ENCODE measurements at regions of chr3 and their contacts with region 1.

Region 1: GRCh38 chr3:148943506-148944205 is 47.7 kb upstream of the GYG1 start:
- DNase-seq: no peak
- H3K4me3 ChIP-seq: no peak overlapping the region
- H3K27ac ChIP-seq: no peak overlapping the region
- H3K4me1 ChIP-seq: peaks cover 3 to 13% (median 6%) of the 10 kb centered on the region in 4 donors
- H3K27me3 ChIP-seq: no peaks in the 10 kb centered on the region
- CTCF ChIP-seq: peak; percentile 58 to 76 (median 70)
- EP300 ChIP-seq: no peak
- POLR2A ChIP-seq: no peak

Region 2: GRCh38 chr3:148379763-148380382 is 563.8 kb before region 1 on chr3:
- in situ Hi-C with region 1: loop called in 3 of 4 experiments (anchors 25 kb)
- intact Hi-C with region 1: loop called (anchors 10 kb)
- DNase-seq: no peak
- H3K4me3 ChIP-seq: no peak overlapping the region
- H3K27ac ChIP-seq: no peak overlapping the region
- H3K4me1 ChIP-seq: no peaks in the 10 kb centered on the region
- H3K27me3 ChIP-seq: no peaks in the 10 kb centered on the region
- CTCF ChIP-seq: peak; percentile 35 to 59 (median 45)
- EP300 ChIP-seq: no peak
- POLR2A ChIP-seq: no peak

Region 3: DNA sequence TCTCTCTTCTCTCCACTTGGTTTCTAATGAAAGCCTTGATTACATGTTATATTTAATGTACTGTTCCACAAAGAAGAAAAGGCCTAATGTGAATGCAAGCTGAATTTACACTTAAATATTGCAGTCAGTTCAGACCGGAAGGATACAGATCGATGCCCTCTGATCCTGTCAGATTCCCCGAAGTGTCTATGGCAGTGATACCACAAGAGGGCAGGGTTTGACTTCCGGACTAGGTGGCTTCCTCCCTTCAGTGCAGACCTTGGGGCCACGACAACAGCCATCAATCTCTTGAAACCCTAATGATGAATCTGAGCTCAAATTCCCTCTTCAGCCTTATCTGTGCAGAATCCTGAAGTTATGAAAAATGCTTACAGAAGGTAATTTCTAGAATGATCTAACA is 216.4 kb before region 1 on chr3:
- in situ Hi-C with region 1: loop called in 1 of 4 experiments (anchors 10 kb)
- intact Hi-C with region 1: loop called (anchors 10 kb)
- DNase-seq: peak; percentile 18
- H3K4me3 ChIP-seq: no peak overlapping the region
- H3K27ac ChIP-seq: no peak overlapping the region
- H3K4me1 ChIP-seq: peaks cover 0 to 2% (median 0%) of the 10 kb centered on the region in 4 donors
- H3K27me3 ChIP-seq: no peaks in the 10 kb centered on the region
- CTCF ChIP-seq: peak; percentile 19 to 35 (median 32)
- EP300 ChIP-seq: no peak
- POLR2A ChIP-seq: no peak

Region 4: GRCh38 chr3:148861277-148861869 is 82.3 kb before region 1 on chr3:
- in situ Hi-C with region 1: loop called in 2 of 4 experiments (anchors 5 kb)
- intact Hi-C with region 1: loop called (anchors 5 kb)
- DNase-seq: no peak
- H3K4me3 ChIP-seq: no peak overlapping the region
- H3K27ac ChIP-seq: no peak overlapping the region
- H3K4me1 ChIP-seq: no peaks in the 10 kb centered on the region
- H3K27me3 ChIP-seq: no peaks in the 10 kb centered on the region
- CTCF ChIP-seq: peak; percentile 72 to 82 (median 75)
- EP300 ChIP-seq: no peak
- POLR2A ChIP-seq: no peak

Region 5: GRCh38 chr3:149142682-149143081 is 199.0 kb after region 1 on chr3:
- in situ Hi-C with region 1: no loop called
- intact Hi-C with region 1: no loop called
- DNase-seq: no peak
- H3K4me3 ChIP-seq: no peak overlapping the region
- H3K27ac ChIP-seq: no peak overlapping the region
- H3K4me1 ChIP-seq: peaks cover 0 to 11% (median 0%) of the 10 kb centered on the region in 4 donors
- H3K27me3 ChIP-seq: no peaks in the 10 kb centered on the region
- CTCF ChIP-seq: no peak
- EP300 ChIP-seq: no peak
- POLR2A ChIP-seq: no peak

Measured in transverse colon (tissue), 4 donors.